ENCODE measurements at regions of chr7 and their contacts with region 1.

Region 1: GRCh38 chr7:10412422-10413019 is 561.2 kb upstream of the PHF14 start:
- DNase-seq: no peak
- H3K4me3 ChIP-seq: no peak overlapping the region
- H3K27ac ChIP-seq: no peak overlapping the region
- H3K4me1 ChIP-seq: no peaks in the 10 kb centered on the region
- H3K27me3 ChIP-seq: no peaks in the 10 kb centered on the region
- CTCF ChIP-seq: peak in 8 of 11 experiments; percentile 18 to 62 (median 46)
- POLR2A ChIP-seq: no peak

Region 2: DNA sequence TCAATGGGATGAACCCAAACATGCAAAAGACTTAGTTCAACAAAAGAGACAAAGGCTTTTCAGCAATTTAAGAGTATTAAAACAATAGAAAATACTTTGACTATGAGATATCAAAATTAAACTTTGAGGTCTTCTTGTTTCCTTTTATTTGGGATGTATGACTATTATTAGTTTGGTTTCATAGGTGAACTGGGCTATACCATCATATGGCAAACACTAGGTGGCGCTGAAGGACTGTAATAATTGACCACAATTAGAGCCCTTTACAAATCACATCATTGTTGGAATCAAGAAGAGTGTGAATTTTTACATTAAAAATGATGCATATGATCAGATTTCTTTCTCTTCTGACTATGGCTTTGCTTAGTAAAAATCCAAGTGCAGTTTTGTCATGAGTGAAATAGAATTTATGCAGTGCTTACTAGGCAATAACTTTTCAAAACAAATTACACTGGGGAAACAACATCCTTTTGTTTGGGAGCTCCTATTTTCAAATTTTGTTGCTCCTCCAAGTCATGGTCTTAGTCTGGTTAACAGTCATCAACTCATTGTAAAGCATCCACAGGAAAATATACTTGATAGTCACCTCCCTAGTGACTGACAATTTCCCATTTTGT is 1993.8 kb before region 1 on chr7:
- intact Hi-C with region 1: loop called (anchors 5 kb)
- DNase-seq: no peak
- H3K4me3 ChIP-seq: no peak overlapping the region
- H3K27ac ChIP-seq: no peak overlapping the region
- H3K4me1 ChIP-seq: no peaks in the 10 kb centered on the region
- H3K27me3 ChIP-seq: peaks cover 0 to 10% (median 0%) of the 10 kb centered on the region in 7 donors
- CTCF ChIP-seq: peak; percentile 23 to 74 (median 63)
- POLR2A ChIP-seq: no peak

Region 3: DNA sequence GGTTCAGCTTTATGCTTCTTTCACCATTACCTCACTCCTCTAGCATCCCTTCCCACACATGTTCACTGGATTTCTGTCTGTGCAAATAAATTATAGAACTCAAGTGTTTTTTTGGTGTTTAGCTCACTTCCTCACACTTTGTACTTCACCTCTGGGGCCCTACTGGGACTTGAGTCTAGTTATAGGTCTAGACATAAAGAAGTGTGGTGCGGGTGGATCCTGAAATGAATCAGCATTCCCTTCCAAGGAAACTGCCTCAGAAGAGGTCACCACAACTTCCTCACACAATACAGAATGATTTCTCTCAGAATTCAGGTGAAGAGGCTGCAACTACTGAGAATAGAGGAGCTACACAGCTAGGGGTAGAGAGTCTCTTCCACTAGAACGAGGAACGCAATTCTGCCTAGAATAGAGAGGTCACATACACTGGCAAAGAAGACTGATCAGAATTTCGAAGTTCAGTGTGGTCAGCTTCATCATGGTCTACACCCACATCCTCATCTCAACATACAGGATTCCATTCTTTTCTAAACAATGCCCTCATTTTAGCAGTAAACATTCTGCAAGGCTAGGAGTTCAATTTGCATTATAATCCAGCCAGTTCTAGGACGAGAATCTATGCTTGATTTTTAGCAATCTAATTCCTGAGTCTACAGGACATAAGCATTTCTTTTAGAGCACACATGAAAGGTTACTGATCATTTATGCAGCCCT is 377.5 kb before region 1 on chr7:
- intact Hi-C with region 1: no loop called
- DNase-seq: no peak
- H3K4me3 ChIP-seq: no peak overlapping the region
- H3K27ac ChIP-seq: no peak overlapping the region
- H3K4me1 ChIP-seq: no peaks in the 10 kb centered on the region
- H3K27me3 ChIP-seq: no peaks in the 10 kb centered on the region
- CTCF ChIP-seq: no peak
- POLR2A ChIP-seq: no peak